Astrocyte of the cerebellum (primary cell): ENCODE measurements at regions of chr6 and their contacts with region 1.

Region 1: DNA sequence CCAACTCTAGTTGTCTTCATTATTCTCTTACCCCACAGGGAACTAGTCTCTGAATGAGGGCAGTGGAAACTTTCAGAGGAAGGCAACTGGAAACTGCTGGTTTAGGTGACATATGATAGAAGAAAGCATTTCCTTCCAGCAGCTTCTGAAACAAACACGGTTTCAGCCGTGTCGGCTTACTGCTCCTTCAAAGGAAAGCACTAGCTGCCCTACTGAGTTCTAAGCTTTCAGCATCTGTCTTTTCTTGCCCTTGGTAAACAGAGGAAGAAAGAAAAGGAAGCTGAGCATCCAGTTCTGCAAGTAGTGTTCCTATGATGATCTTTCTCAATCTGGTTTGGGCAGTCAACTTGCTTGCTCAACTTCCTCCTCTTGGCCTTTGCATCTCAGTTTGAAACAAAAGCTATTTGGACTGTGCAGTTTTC is 117.5 kb upstream of the CEP85L start:
- DNase-seq: no peak
- H3K4me3 ChIP-seq: no peak overlapping the region
- CTCF ChIP-seq: no peak

Region 2: GRCh38 chr6:118283766-118284165 is 485.1 kb before region 1 on chr6:
- in situ Hi-C with region 1: loop called (anchors 25 kb)
- DNase-seq: peak; percentile 61
- H3K4me3 ChIP-seq: no peak overlapping the region
- CTCF ChIP-seq: peak; percentile 81